ENCODE measurements at regions of chr11 and their contacts with region 1.

Region 1: DNA sequence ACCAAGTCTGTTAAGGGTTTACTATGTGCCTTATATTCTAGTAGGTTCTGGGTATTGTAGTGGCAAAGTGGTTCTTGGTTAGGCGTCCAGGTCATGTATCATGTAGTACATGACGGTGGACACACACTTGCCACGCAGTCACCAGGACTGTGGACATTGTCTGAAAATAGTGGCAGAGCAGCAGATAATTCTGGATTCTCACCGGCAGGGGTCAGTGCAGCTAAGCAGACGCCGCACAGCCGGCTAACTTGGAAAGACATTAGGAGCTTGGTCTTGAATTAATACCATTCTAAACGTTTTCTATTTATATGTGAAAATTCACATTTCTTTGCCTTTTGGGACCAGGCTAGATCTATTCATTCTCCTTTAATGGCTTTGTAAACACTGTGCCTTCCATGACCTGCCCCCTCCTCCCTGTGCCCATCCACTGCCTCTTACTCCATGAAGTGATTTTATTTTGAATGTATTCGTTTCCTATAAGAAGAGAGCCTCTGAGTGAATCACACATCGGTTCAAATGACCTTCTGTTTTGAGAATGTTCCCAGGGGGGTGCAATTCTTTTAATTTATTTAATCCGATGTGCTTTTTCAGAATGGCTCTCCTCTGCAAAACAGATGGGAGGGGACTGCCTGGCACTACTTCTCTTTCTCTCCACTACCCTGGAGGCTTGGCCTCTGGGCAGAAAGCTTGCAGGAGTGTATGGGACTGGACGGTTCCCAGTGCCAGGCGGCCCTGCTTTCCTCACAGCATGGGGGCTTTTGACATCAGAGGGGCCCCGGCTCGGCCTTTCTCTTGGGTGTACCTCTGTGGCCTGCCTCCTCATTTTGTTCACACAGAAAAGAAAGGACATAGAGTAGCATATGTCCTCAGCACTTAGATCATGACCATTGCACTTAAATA is 378.0 kb downstream of the NTM start:
- DNase-seq: peak; percentile 42
- H3K4me3 ChIP-seq: no peak overlapping the region
- H3K27ac ChIP-seq: no peak overlapping the region
- H3K4me1 ChIP-seq: peaks cover 6% of the 10 kb centered on the region
- H3K27me3 ChIP-seq: no peaks in the 10 kb centered on the region
- CTCF ChIP-seq: peak; percentile 85 to 92

Region 2: DNA sequence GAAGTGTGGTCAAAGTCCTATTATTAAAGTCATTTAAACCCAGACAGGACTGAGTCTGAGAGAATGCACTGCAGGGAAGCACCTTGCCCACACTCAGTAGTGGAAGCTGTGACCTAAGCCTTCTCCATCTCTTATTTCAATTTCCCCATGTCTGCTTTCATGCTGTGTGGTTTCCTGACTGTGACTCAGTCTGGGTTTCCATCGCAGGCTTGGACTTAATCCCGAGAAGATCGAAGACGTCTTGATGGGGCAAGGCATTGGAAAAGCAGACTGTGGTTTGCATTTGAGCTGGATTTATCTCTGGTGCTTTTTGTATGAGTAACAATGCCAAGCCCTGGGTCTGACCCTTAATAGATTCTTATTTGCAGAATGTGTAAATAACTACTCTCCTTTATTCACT is 139.1 kb before region 1 on chr11:
- CTCF ChIA-PET with region 1: no interaction called
- dilution Hi-C with region 1: no loop called
- in situ Hi-C with region 1: no loop called
- intact Hi-C with region 1: no loop called
- DNase-seq: peak; percentile 8
- H3K4me3 ChIP-seq: no peak overlapping the region
- H3K27ac ChIP-seq: no peak overlapping the region
- H3K4me1 ChIP-seq: no peaks in the 10 kb centered on the region
- H3K27me3 ChIP-seq: peaks cover 2% of the 10 kb centered on the region
- CTCF ChIP-seq: no peak

Region 3: GRCh38 chr11:131809203-131809918 is 61.0 kb after region 1 on chr11:
- CTCF ChIA-PET with region 1: no interaction called
- dilution Hi-C with region 1: loop called (anchors 5 kb)
- in situ Hi-C with region 1: no loop called
- intact Hi-C with region 1: no loop called
- DNase-seq: peak; percentile 1
- H3K4me3 ChIP-seq: no peak overlapping the region
- H3K27ac ChIP-seq: no peak overlapping the region
- H3K4me1 ChIP-seq: peaks cover 20% of the 10 kb centered on the region
- H3K27me3 ChIP-seq: peaks cover 8% of the 10 kb centered on the region
- CTCF ChIP-seq: no peak

Region 4: GRCh38 chr11:131867457-131868257 is 119.3 kb after region 1 on chr11:
- CTCF ChIA-PET with region 1: no interaction called
- dilution Hi-C with region 1: no loop called
- in situ Hi-C with region 1: no loop called
- intact Hi-C with region 1: loop called (anchors 2 kb)
- DNase-seq: peak; percentile 70
- H3K4me3 ChIP-seq: no peak overlapping the region
- H3K27ac ChIP-seq: no peak overlapping the region
- H3K4me1 ChIP-seq: peaks cover 6% of the 10 kb centered on the region
- H3K27me3 ChIP-seq: no peaks in the 10 kb centered on the region
- CTCF ChIP-seq: peak; percentile 95 to 98

Region 5: DNA sequence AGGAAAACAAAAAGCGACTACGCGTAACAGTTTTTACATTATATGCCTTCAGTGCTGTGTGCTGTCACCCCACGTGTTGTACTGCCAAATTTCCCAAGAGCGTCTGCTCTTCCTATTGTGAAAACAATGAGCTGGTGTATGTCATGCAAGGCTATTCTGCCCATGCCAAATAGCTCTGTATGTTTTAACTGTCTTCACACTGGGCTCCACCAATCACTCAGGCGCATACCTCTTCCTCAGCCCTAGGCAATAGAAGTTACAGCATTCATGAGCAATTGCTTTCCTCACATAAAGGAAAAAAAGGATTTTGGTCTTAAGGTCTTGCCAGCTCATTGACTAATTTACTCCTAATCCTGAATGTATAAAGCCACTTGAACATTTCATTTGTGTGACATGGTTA is 228.8 kb after region 1 on chr11:
- CTCF ChIA-PET with region 1: no interaction called
- dilution Hi-C with region 1: no loop called
- in situ Hi-C with region 1: no loop called
- intact Hi-C with region 1: loop called (anchors 1 kb)
- DNase-seq: peak; percentile 95
- H3K4me3 ChIP-seq: peak overlapping the region in 2 of 3 experiments; percentile 21 to 26
- H3K27ac ChIP-seq: peak overlapping the region; percentile 95
- H3K4me1 ChIP-seq: peaks cover 29% of the 10 kb centered on the region
- H3K27me3 ChIP-seq: no peaks in the 10 kb centered on the region
- CTCF ChIP-seq: no peak

Region 6: DNA sequence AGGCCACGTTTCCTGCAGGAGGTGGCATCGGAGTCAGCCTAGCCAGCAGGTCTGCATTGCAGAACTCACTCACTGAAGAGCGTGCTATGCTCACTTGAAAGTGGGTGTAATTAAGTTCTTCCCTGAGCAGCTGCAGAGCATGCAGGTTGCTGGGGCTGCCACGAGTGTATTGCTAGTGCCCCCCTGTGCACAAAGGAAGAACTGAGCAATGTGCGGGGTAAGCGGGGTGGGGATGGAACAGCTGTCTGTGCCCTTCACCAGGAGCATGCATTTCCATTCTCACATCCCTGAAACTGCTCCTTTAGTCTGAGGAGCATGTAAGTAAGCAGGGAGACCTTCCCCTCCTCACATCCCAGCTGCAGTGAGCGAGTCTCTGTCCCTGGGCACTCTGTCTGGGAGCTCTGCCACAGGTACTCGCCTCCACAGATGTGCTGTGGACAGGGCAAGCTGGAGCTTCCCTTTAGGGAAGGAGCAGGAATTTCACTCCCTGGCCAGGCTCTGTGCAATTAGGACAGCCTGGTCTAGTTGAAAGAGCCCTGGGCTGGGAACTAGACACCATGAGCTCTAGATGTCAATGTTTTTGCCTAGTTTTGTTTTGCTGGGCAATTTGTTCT is 653.8 kb after region 1 on chr11:
- CTCF ChIA-PET with region 1: no interaction called
- dilution Hi-C with region 1: no loop called
- in situ Hi-C with region 1: no loop called
- intact Hi-C with region 1: loop called (anchors 1 kb)
- DNase-seq: peak; percentile 39
- H3K4me3 ChIP-seq: no peak overlapping the region
- H3K27ac ChIP-seq: no peak overlapping the region
- H3K4me1 ChIP-seq: no peaks in the 10 kb centered on the region
- H3K27me3 ChIP-seq: no peaks in the 10 kb centered on the region
- CTCF ChIP-seq: peak; percentile 62 to 71

Region 7: GRCh38 chr11:133064152-133064877 is 1315.9 kb after region 1 on chr11:
- CTCF ChIA-PET with region 1: no interaction called
- dilution Hi-C with region 1: no loop called
- in situ Hi-C with region 1: no loop called
- intact Hi-C with region 1: loop called (anchors 10 kb)
- DNase-seq: peak; percentile 30
- H3K4me3 ChIP-seq: peak overlapping the region; percentile 52 to 58 (median 57)
- H3K27ac ChIP-seq: no peak overlapping the region
- H3K4me1 ChIP-seq: peaks cover 11% of the 10 kb centered on the region
- H3K27me3 ChIP-seq: no peaks in the 10 kb centered on the region
- CTCF ChIP-seq: peak; percentile 58 to 82